ENCODE measurements at regions of chr3 and their contacts with region 1.

Region 1: GRCh38 chr3:17730318-17730967 is 12.0 kb downstream of the TBC1D5 start:
- DNase-seq: peak in 1 of 2 experiments; percentile 26
- H3K4me3 ChIP-seq: no peak overlapping the region
- H3K27ac ChIP-seq: no peak overlapping the region
- H3K4me1 ChIP-seq: no peaks in the 10 kb centered on the region
- H3K27me3 ChIP-seq: no peaks in the 10 kb centered on the region
- CTCF ChIP-seq: no peak

Region 2: GRCh38 chr3:17747174-17747889 is 16.9 kb after region 1 on chr3:
- CTCF ChIA-PET with region 1: interaction called, 13 read pairs
- POLR2A ChIA-PET with region 1: interaction called, 7 read pairs
- intact Hi-C with region 1: no loop called
- DNase-seq: no peak
- H3K4me3 ChIP-seq: no peak overlapping the region
- H3K27ac ChIP-seq: no peak overlapping the region
- H3K4me1 ChIP-seq: peaks cover 12% of the 10 kb centered on the region
- H3K27me3 ChIP-seq: no peaks in the 10 kb centered on the region
- CTCF ChIP-seq: no peak

Measured in PC-9 (cell line).